ENCODE measurements at regions of chr1 and their contacts with region 1.

Region 1: DNA sequence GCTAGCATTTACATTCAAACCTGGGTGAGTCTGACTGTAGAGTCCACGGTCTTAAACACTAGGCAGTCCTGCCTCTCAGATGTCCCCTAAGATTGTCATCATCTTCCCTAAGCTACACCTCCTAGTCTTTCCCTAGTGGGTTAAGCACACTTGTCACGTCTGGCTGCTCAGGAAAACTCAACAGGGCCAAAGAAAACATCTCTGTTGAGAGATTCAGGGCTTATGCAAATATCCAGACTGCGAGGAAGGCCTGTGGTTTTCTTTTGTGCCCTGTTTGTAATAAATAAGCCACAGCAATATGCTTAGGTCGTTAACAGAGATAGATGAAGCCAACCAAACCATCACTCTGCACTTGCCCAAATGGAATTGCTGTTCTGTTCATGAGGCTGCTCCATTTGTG is 472.6 kb upstream of the DEPDC1 start:
- DNase-seq: no peak
- ATAC-seq: no peak
- H3K4me3 ChIP-seq: no peak overlapping the region
- H3K27ac ChIP-seq: no peak overlapping the region
- H3K4me1 ChIP-seq: no peaks in the 10 kb centered on the region
- H3K27me3 ChIP-seq: no peaks in the 10 kb centered on the region
- CTCF ChIP-seq: no peak

Region 2: DNA sequence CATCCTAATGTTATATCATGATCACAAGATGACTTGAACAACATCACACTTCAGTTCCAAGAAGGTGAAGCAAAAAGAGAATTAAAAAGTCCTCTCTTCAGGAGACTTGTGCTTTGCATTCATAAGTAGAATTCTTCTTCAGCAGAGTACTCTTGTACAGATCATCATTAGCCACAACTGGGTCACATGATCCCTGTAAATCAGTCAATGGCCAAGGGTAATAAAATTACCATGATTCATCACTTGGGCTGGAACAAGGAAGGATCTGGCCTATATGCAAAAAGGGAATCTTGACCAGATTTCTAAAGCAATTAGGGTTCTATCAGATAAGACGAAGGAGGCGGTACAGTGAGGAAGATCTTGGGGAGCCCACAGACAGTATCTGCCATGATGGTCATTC is 14.6 kb before region 1 on chr1:
- intact Hi-C with region 1: loop called in 1 of 2 experiments (anchors 1 kb)
- DNase-seq: no peak
- ATAC-seq: no peak
- H3K4me3 ChIP-seq: no peak overlapping the region
- H3K27ac ChIP-seq: no peak overlapping the region
- H3K4me1 ChIP-seq: no peaks in the 10 kb centered on the region
- H3K27me3 ChIP-seq: peaks cover 0 to 2% (median 0%) of the 10 kb centered on the region in 3 donors
- CTCF ChIP-seq: no peak

Region 3: DNA sequence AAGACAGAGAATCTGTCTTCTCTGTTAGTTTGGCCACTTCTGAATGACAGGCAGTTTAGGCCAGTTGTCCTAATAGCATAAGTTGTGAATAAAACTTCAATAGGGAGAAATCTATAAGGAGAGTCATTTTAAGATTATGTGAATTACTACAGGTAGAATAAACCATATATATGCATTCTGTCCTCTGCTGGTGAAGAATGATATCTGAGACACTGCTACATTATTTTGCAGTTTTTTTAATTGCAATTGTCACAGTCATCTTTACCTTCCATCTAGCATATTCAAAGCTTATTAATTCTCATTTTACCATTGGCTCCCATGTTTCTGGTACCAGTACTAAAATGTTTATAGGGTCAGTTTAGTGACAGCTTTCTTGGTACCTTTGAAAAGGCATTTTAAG is 47.0 kb after region 1 on chr1:
- intact Hi-C with region 1: no loop called
- DNase-seq: no peak
- ATAC-seq: no peak
- H3K4me3 ChIP-seq: no peak overlapping the region
- H3K27ac ChIP-seq: no peak overlapping the region
- H3K4me1 ChIP-seq: no peaks in the 10 kb centered on the region
- H3K27me3 ChIP-seq: no peaks in the 10 kb centered on the region
- CTCF ChIP-seq: no peak